ENCODE measurements at regions of chr11 and their contacts with region 1.

Region 1: DNA sequence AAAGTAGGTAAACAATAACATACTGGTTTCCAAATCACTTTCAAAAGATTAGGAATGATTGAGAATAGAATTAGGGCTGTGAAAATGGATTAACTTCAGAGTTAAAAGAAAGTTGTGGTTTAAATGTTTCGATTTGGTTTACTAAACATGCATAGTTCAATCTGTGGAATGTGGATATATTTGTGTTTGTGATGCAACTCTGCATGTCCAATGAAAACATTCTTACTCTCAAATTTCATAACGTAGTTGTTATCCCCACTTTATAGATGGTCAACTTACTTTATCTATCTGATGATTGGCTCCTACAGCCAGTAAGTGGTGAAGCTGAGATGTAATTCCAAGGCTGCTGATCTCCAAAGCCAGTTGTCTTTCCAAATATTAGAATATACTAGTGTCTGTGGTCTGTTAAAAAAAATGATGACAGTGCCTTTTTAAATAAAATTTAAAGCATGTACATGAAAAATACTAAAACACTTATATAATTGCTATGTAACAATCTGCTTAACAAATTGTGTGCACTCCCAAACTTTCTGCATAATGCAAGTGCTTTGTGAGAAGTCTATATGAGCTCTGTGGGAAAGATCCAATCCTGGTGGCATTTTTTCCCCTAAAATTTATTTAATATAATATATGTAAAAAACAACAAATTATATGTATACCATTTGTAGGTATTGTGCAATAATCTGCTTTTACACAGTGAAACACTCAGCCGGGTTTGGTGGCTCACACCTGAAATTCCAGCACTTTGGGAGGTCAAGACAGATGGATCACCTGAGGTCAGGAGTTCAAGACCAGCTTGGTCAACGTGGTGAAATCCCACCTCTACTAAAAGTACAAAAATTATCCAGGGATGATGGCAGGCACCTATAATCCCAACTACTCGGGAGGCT is 9.7 kb upstream of the SIK3 start:
- DNase-seq: no peak
- ATAC-seq: no peak
- H3K4me3 ChIP-seq: no peak overlapping the region
- H3K27ac ChIP-seq: no peak overlapping the region
- H3K4me1 ChIP-seq: no peaks in the 10 kb centered on the region
- H3K27me3 ChIP-seq: no peaks in the 10 kb centered on the region
- CTCF ChIP-seq: no peak
- POLR2A ChIP-seq: no peak

Region 2: GRCh38 chr11:116879800-116880625 is 227.9 kb before region 1 on chr11:
- in situ Hi-C with region 1: loop called (anchors 5 kb)
- intact Hi-C with region 1: loop called (anchors 1 kb)
- DNase-seq: no peak
- ATAC-seq: peak; percentile 46 to 78
- H3K4me3 ChIP-seq: no peak overlapping the region
- H3K27ac ChIP-seq: no peak overlapping the region
- H3K4me1 ChIP-seq: peaks cover 12 to 16% of the 10 kb centered on the region in 2 donors
- H3K27me3 ChIP-seq: no peaks in the 10 kb centered on the region
- CTCF ChIP-seq: peak; percentile 44 to 70 (median 51)
- POLR2A ChIP-seq: no peak